ENCODE measurements at regions of chr4 and their contacts with region 1.

Region 1: GRCh38 chr4:67983333-67983732 is 20.0 kb upstream of the TMPRSS11A start:
- ATAC-seq: no peak
- H3K4me3 ChIP-seq: no peak overlapping the region
- H3K27ac ChIP-seq: no peak overlapping the region
- H3K4me1 ChIP-seq: no peaks in the 10 kb centered on the region

Region 2: DNA sequence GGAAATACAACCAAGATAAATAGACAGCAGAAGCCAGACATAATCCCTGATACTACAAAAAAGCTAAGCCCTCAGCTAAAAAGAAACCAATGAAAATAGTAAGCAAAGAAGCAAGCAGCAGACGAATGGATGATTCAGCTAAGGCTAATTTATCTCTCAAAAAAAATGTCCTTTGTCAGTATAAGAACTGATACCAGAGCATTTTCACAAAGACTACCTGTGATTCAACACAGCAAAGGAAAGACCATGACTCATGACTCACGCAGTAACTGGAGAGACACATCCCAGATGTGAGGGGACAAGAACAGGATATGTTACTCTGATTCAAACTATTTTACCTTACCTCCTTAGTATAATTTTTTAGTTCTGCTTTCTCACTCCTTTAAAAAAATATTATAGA is 169.1 kb after region 1 on chr4:
- in situ Hi-C with region 1: loop called in 2 of 9 experiments (anchors 25 kb)
- ATAC-seq: peak in 5 of 8 experiments; percentile 73 to 82 (median 76)
- H3K4me3 ChIP-seq: no peak overlapping the region
- H3K27ac ChIP-seq: no peak overlapping the region
- H3K4me1 ChIP-seq: no peaks in the 10 kb centered on the region

Region 3: DNA sequence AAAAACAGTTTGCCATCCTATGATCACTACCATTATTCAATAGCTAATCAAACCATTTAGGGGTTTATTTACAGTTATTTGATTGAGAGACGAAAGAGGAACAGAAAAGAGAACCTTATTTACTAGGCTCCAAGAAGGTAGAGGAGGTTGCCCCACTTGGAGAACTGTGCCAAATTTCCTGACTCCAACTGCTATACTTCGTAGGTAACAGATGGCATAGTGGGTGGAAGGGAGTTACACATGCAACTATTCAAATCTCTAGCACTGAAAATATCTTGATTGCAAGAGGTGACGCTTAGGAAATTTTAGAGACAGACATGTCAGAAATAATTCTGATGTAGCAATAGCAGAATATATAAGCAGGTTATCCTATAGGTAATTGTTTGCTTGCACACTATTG is 184.4 kb after region 1 on chr4:
- in situ Hi-C with region 1: loop called in 3 of 9 experiments (anchors 10 to 25 kb)
- ATAC-seq: no peak
- H3K4me3 ChIP-seq: no peak overlapping the region
- H3K27ac ChIP-seq: no peak overlapping the region
- H3K4me1 ChIP-seq: no peaks in the 10 kb centered on the region